ENCODE measurements at regions of chr20 and their contacts with region 1.

Region 1: GRCh38 chr20:1619861-1620444 is at the start of gene SIRPB1:
- DNase-seq: no peak
- H3K4me3 ChIP-seq: no peak within 1 kb of the TSS
- H3K27ac ChIP-seq: no peak within 1 kb of the TSS
- H3K4me1 ChIP-seq: peaks cover 0 to 8% (median 0%) of the 10 kb centered on the region in 4 donors
- H3K27me3 ChIP-seq: no peaks in the 10 kb centered on the region
- CTCF ChIP-seq: no peak
- EP300 ChIP-seq: no peak
- POLR2A ChIP-seq: no peak
- total RNA-seq, gene SIRPB1: 0.14 to 1.3 TPM in 2 of 4 donors, not detected in the others

Region 2: DNA sequence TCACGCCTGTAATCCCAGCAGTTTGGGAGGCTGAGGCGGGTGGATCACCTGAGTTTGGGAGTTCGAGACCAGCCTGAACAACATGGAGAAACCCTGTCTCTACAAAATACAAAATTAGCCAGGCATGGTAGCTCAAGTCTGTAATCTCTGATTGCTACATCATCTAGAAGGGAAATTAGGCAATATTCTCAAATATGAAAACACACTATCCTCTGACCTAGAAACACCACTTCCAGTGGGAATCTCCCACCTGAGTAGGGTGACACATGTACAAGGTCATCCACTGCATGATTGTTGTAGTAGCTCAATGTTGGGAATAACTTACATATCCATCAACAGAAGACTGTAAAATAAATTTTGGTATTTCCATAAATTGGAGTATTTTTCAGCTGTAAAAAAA is 43.3 kb before region 1 on chr20:
- in situ Hi-C with region 1: loop called in 1 of 4 experiments (anchors 5 kb)
- intact Hi-C with region 1: loop called (anchors 2 kb)
- DNase-seq: no peak
- H3K4me3 ChIP-seq: no peak overlapping the region
- H3K27ac ChIP-seq: no peak overlapping the region
- H3K4me1 ChIP-seq: no peaks in the 10 kb centered on the region
- H3K27me3 ChIP-seq: no peaks in the 10 kb centered on the region
- CTCF ChIP-seq: no peak
- EP300 ChIP-seq: no peak
- POLR2A ChIP-seq: no peak